ENCODE measurements at regions of chr19 and their contacts with region 1.

Region 1: DNA sequence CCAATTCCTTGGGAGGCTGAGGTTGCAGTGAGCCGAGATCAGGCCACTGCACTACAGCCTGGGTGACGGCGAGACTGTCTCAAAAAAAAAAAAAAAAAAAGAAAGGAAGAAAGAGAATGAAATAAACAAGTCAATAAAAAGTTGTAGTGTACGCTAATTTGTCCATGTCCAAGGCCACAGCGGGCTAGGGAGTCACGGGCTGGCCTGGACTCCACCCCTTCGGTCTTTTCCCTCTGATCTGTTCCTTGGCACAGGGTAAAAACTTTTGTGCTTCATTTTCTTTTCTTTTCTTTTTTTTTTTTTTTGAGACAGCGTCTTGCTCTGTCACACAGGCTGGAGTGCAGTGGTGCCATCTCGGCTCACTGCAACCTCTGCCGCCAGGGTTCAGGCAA is 19.4 kb upstream of the MKNK2 start:
- DNase-seq: no peak
- H3K4me3 ChIP-seq: no peak overlapping the region
- H3K27ac ChIP-seq: no peak overlapping the region
- H3K4me1 ChIP-seq: no peaks in the 10 kb centered on the region
- H3K27me3 ChIP-seq: no peaks in the 10 kb centered on the region
- CTCF ChIP-seq: no peak
- EP300 ChIP-seq: no peak
- RAD21 ChIP-seq: no peak

Region 2: DNA sequence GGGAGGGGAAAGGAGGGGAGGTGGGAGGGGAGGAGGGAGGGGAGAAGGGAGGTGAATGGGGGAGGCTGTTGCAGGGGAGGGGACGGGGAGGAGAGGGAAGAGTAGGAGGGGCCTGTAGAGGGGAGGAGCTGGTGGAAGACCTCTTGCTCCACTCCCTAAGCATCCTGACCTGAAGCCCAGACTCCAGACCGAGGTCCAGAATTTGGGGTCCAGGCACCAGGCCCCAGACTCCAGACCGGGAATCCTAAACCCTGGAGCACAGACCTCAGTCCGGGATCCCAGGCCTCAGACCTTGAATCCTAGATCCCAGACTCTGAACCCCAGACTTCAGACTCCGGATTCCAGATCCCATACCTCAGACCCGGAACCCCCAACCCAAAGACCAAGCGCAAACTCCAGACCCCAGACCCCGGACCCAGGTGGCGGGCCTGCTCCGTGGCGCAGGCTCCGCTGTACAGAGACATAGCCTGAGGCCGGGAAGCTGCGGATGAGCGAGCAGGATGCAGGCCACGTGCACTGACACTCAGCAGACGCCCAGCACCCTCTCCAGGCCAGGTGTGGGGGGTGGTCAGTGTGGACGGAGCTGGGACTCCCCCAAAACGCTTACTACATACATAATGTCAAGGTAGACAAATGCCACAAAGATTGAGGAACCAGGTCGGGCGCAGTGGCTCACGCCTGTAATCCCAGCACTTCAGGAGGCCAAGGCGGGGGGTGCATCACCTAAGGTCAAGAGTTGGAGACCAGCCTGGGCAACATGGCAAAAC is 54.2 kb before region 1 on chr19:
- CTCF ChIA-PET with region 1: interaction called, 43 read pairs
- POLR2A ChIA-PET with region 1: no interaction called
- DNase-seq: peak; percentile 87
- H3K4me3 ChIP-seq: peak overlapping the region; percentile 37 to 50
- H3K27ac ChIP-seq: peak overlapping the region; percentile 48 to 89; a peak in 3 of 4 replicates
- H3K4me1 ChIP-seq: peaks cover 4 to 18% of the 10 kb centered on the region in 2 experiments; a peak in 2 of 4 replicates
- H3K27me3 ChIP-seq: no peaks in the 10 kb centered on the region
- CTCF ChIP-seq: no peak
- EP300 ChIP-seq: peak in 1 of 2 experiments; percentile 64; a peak in 2 of 4 replicates
- RAD21 ChIP-seq: no peak

Region 3: GRCh38 chr19:2032296-2032941 is 38.0 kb before region 1 on chr19:
- CTCF ChIA-PET with region 1: interaction called, 15 read pairs
- POLR2A ChIA-PET with region 1: interaction called, 3 read pairs
- DNase-seq: peak; percentile 91
- H3K4me3 ChIP-seq: no peak overlapping the region
- H3K27ac ChIP-seq: peak overlapping the region; percentile 55 to 95
- H3K4me1 ChIP-seq: peaks cover 10 to 23% of the 10 kb centered on the region in 2 experiments; a peak in 3 of 4 replicates
- H3K27me3 ChIP-seq: no peaks in the 10 kb centered on the region
- CTCF ChIP-seq: no peak
- EP300 ChIP-seq: peak; percentile 46 to 49; a peak in 3 of 4 replicates
- RAD21 ChIP-seq: peak; percentile 19; the same call in 1 of the 2 replicates

Region 4: DNA sequence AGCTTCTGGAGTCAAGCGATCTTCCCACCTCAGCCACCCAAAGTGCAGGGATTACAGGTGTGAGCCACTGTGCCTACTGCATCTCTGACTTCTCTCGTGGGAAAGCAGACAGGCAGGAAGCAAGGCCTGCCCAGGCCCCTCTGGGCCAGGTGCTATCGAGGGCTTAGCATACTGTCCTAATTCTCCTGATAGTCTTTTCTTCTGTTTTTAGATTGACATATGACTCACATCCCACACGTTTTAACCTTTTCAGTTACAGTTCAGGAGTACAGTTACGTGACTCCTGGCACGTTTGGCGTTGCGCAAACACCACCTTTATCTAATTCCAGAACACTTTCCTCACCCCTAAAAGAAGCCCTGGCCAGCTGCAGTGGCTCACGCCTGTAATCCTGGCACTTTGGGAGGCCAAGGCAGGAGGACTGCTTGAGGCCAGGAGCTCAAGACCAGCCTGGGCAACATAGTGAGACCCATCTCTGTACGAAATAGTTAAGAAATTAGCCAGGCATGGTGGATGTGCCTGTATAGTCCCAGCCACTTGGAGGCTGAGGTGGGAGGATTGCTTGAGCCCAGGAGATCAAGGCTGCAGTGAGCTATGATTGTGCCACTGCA is 16.7 kb after region 1 on chr19:
- CTCF ChIA-PET with region 1: interaction called, 15 read pairs
- POLR2A ChIA-PET with region 1: no interaction called
- DNase-seq: peak; percentile 4
- H3K4me3 ChIP-seq: no peak overlapping the region
- H3K27ac ChIP-seq: no peak overlapping the region
- H3K4me1 ChIP-seq: peaks cover 16 to 25% of the 10 kb centered on the region in 2 experiments; a peak in 2 of 4 replicates
- H3K27me3 ChIP-seq: no peaks in the 10 kb centered on the region
- CTCF ChIP-seq: no peak
- EP300 ChIP-seq: no peak
- RAD21 ChIP-seq: no peak

Measured in SK-N-SH (cell line).